HCT116 (cell line): ENCODE measurements at regions of chr12 and their contacts with region 1.

Region 1: GRCh38 chr12:122642009-122642408 is 61.1 kb downstream of the HCAR2 start:
- DNase-seq: no peak
- ATAC-seq: no peak
- H3K4me3 ChIP-seq: no peak overlapping the region
- H3K27ac ChIP-seq: no peak overlapping the region
- H3K4me1 ChIP-seq: peaks cover 0 to 6% of the 10 kb centered on the region in 2 experiments; a peak in 1 of 4 replicates
- H3K27me3 ChIP-seq: no peaks in the 10 kb centered on the region
- CTCF ChIP-seq: no peak
- POLR2A ChIP-seq: no peak
- RAD21 ChIP-seq: no peak

Region 2: GRCh38 chr12:122752464-122753318 is 110.7 kb after region 1 on chr12 and contains the start of gene DENR:
- CTCF ChIA-PET with region 1: interaction called, 3 read pairs
- POLR2A ChIA-PET with region 1: no interaction called
- RAD21 ChIA-PET with region 1: interaction called, 3 to 6 read pairs
- intact Hi-C with region 1: loop called (anchors 1 kb)
- DNase-seq: peak; percentile 96
- ATAC-seq: peak; percentile 89
- H3K4me3 ChIP-seq: peak within 1 kb of the TSS; percentile 90 to 99
- H3K27ac ChIP-seq: peak within 1 kb of the TSS; percentile 77
- H3K4me1 ChIP-seq: peaks cover 5 to 14% of the 10 kb centered on the region in 2 experiments; a peak in 3 of 4 replicates
- H3K27me3 ChIP-seq: no peaks in the 10 kb centered on the region
- CTCF ChIP-seq: peak; percentile 48 to 91 (median 70)
- POLR2A ChIP-seq: peak; percentile 85
- RAD21 ChIP-seq: peak; percentile 99
- total RNA-seq, gene DENR: 59.1 TPM

Region 3: DNA sequence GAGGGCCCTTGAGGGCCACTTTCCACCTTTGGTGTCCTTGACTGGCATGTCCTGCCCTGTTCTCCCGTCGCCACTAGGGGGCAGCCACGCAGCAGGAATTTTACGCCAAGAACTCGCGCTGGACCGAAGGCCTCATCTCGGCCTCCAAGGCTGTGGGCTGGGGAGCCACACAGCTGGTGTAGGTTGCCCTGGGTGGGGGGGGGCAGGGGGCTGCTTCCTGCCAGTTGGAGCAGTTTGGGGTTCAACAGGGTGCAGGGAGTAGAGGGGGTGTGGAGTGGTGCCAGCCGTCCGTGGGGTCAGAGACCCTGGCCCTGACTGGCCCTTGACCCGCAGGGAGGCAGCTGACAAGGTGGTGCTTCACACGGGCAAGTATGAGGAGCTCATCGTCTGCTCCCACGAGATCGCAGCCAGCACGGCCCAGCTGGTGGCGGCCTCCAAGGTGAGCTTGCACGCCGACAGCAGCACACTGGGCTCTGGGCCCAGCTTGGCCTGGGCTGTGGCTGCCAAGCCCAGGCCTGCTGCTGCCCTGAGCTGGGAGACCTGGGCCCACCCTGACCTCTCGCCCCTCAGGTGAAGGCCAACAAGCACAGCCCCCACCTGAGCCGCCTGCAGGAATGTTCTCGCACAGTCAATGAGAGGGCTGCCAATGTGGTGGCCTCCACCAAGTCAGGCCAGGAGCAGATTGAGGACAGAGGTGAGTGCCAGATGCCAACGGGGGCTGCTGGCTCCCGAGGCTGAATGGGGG is 218.5 kb after region 1 on chr12:
- CTCF ChIA-PET with region 1: interaction called, 3 read pairs
- POLR2A ChIA-PET with region 1: no interaction called
- RAD21 ChIA-PET with region 1: no interaction called
- intact Hi-C with region 1: loop called (anchors 2 kb)
- DNase-seq: peak; percentile 50
- ATAC-seq: peak; percentile 74
- H3K4me3 ChIP-seq: no peak overlapping the region
- H3K27ac ChIP-seq: no peak overlapping the region
- H3K4me1 ChIP-seq: no peaks in the 10 kb centered on the region
- H3K27me3 ChIP-seq: no peaks in the 10 kb centered on the region
- CTCF ChIP-seq: peak; percentile 87 to 94 (median 87)
- POLR2A ChIP-seq: no peak
- RAD21 ChIP-seq: peak; percentile 96